MCF 10A (cell line): ENCODE measurements at regions of chr2 and their contacts with region 1.

Region 1: GRCh38 chr2:176638167-176639015 is 369.1 kb downstream of the MTX2 start:
- DNase-seq: peak; percentile 61
- H3K4me3 Mint-ChIP-seq: peak overlapping the region; percentile 74
- H3K27ac Mint-ChIP-seq: no peak overlapping the region
- H3K4me1 Mint-ChIP-seq: peaks cover 6% of the 10 kb centered on the region
- H3K27me3 Mint-ChIP-seq: no peaks in the 10 kb centered on the region
- CTCF ChIP-seq: peak; percentile 85

Region 2: GRCh38 chr2:176135034-176135440 is 503.4 kb before region 1 on chr2:
- CTCF ChIA-PET with region 1: interaction called, 98 read pairs
- POLR2A ChIA-PET with region 1: interaction called, 3 read pairs
- intact Hi-C with region 1: loop called (anchors 1 kb)
- DNase-seq: no peak
- H3K4me3 Mint-ChIP-seq: no peak overlapping the region
- H3K27ac Mint-ChIP-seq: peak overlapping the region; percentile 53
- H3K4me1 Mint-ChIP-seq: no peaks in the 10 kb centered on the region
- H3K27me3 Mint-ChIP-seq: no peaks in the 10 kb centered on the region
- CTCF ChIP-seq: no peak

Region 3: DNA sequence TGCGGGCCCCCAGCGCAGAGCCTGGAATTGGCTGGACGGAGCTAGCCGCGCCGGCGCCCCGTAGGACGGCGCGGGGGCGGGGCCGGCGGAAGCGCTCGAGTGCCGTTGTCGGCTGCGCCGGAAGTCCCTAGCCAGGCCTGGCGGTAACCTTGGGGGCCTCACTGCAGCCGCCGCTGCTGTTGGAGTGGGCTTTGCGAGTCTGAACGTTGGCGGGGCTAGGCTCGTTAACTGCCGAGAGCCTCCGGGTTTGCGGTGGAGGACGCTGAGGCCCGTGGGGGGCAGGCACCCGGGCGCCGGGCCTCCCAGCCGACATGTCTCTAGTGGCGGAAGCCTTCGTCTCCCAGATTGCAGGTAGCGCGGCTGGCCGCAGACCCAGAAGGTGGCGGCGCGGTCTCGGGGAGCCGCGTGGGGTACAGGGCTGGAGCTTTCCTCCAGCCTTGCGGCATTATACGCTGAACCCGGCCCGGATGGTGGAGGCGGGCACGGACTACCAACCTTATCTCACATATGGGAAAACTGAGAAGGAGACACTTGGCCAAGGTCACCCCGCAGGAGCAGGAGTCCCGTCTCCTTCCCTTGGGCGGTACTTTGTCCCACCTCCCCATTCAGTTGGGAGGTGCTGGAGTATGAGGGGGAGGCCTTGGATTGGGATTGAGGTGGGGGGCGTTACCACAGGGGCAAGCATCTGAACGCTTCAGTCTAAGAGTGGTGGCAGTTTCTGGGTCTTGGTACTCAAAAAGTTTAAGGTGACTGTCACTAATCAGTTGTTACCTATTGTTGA is 368.9 kb before region 1 on chr2 and contains the start of gene MTX2:
- CTCF ChIA-PET with region 1: no interaction called
- POLR2A ChIA-PET with region 1: interaction called, 6 read pairs
- intact Hi-C with region 1: loop called (anchors 10 kb)
- DNase-seq: peak; percentile 79
- H3K4me3 Mint-ChIP-seq: peak within 1 kb of the TSS; percentile 99
- H3K27ac Mint-ChIP-seq: peak within 1 kb of the TSS; percentile 99
- H3K4me1 Mint-ChIP-seq: peaks cover 16% of the 10 kb centered on the region
- H3K27me3 Mint-ChIP-seq: no peaks in the 10 kb centered on the region
- CTCF ChIP-seq: peak; percentile 11
- total RNA-seq, gene MTX2: 38.0 and 40.9 TPM in 2 replicates